ENCODE measurements at regions of chr1 and their contacts with region 1.

Region 1: GRCh38 chr1:224454397-224455066 is 19.9 kb upstream of the WDR26 start:
- DNase-seq: peak; percentile 79
- H3K4me3 ChIP-seq: peak overlapping the region; percentile 0 to 20
- H3K27ac ChIP-seq: peak overlapping the region; percentile 83 to 84
- H3K4me1 ChIP-seq: peaks cover 12% of the 10 kb centered on the region
- H3K27me3 ChIP-seq: no peaks in the 10 kb centered on the region
- CTCF ChIP-seq: no peak
- POLR2A ChIP-seq: no peak

Region 2: DNA sequence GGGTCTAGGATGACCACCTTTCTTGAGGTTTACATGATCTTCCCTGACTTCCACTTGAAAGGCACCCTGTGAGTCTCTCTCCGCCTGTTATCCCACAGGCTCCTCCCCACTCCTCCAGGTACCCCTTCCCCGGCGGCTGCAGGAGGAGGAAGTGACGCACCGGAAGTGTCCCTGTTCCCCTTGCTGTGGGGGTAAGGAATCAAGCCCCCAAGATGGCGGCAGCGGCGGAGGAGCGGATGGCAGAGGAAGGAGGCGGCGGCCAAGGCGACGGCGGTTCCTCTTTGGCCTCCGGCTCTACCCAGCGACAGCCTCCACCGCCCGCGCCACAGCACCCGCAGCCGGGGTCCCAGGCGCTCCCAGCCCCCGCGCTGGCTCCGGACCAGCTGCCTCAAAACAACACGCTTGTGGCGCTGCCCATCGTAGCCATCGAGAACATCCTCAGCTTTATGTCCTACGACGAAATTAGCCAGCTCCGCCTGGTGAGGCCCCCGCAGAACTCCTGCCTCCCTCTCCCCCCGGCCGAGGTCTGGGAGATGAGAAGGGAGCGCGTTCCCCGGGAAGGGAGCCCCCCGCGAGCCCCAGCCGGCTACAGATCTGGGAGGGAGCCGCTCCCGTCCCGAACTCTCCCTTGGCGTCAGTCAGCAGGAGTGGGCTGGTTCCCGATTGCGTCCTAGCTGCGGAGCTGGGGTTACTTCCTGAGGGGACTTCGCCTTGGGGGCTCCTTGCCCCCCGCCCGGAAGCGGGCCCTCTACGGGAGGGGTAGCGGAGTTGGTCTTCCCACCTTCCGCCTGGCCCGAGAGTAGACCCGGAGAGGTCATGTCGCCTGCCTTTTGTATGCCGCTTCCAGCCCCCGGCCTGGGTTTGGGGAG is 340.4 kb before region 1 on chr1 and contains the start of gene FBXO28:
- intact Hi-C with region 1: loop called (anchors 5 kb)
- DNase-seq: peak; percentile 95
- H3K4me3 ChIP-seq: peak within 1 kb of the TSS; percentile 79 to 96
- H3K27ac ChIP-seq: peak within 1 kb of the TSS; percentile 95 to 97
- H3K4me1 ChIP-seq: peaks cover 4% of the 10 kb centered on the region
- H3K27me3 ChIP-seq: no peaks in the 10 kb centered on the region
- CTCF ChIP-seq: no peak
- POLR2A ChIP-seq: peak; percentile 92
- total RNA-seq, gene FBXO28: 29.0 to 40.0 TPM

Region 3: GRCh38 chr1:224356685-224357625 is 97.6 kb before region 1 on chr1 and contains the start of gene CNIH4:
- intact Hi-C with region 1: loop called (anchors 10 kb)
- DNase-seq: peak; percentile 95
- H3K4me3 ChIP-seq: peak within 1 kb of the TSS; percentile 79 to 91
- H3K27ac ChIP-seq: peak within 1 kb of the TSS; percentile 80 to 88
- H3K4me1 ChIP-seq: no peaks in the 10 kb centered on the region
- H3K27me3 ChIP-seq: no peaks in the 10 kb centered on the region
- CTCF ChIP-seq: no peak
- POLR2A ChIP-seq: peak; percentile 95
- total RNA-seq, gene CNIH4: 14.5 to 31.5 TPM

Region 4: GRCh38 chr1:224434691-224435317 is 19.7 kb before region 1 on chr1 and contains the start of gene WDR26:
- intact Hi-C with region 1: loop called (anchors 1 kb)
- DNase-seq: peak; percentile 88
- H3K4me3 ChIP-seq: peak within 1 kb of the TSS; percentile 65 to 87
- H3K27ac ChIP-seq: peak within 1 kb of the TSS; percentile 94 to 97
- H3K4me1 ChIP-seq: peaks cover 8% of the 10 kb centered on the region
- H3K27me3 ChIP-seq: no peaks in the 10 kb centered on the region
- CTCF ChIP-seq: peak in 2 of 4 experiments; percentile 33 to 55
- POLR2A ChIP-seq: peak; percentile 80
- total RNA-seq, gene WDR26: 50.7 to 72.9 TPM

Region 5: DNA sequence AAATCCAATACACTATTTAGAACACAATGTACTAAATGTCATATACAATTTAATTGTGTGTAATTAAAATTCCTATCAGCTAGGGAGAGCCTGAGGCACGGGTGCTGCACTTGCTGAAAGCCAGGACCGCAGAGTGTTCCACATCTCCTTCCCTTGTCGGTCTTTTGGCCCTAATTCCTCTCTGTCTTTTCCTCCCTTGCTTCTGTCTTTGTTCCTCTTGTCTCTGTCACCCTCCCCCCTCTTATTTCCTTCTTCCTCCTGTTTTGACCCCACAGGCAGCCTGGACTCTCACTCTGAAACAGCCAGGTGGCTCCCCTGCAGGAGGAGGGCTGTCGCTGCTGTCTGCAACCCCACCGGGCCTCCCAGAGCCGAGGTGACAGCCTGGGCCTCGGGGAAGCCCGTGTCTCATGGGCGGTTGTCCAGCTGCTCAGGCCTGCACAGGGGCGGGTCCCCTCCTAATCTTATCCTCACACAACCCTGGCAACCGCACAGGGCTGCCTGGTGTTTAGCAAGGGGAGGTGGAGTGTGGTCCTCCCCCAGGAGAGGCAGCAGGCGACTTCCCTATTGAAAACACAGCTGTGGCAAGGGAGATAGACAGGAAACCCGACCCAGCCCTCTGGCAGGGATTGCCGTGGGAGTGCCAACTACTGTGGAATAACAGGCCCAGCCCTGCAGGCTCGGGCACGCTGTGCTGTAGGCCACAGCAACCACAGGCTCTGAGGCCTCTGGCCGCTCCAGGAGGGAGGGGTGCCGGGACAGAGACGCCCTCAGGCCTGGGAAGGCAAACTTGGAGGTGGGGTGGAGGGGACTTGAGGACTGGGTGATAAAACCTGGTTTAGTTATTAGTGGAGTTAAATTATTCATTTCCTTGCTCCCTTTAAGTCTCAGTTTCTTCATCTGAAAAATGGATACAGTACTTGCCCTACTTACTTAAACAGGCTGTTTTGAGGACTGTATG is 48.9 kb after region 1 on chr1:
- intact Hi-C with region 1: loop called (anchors 10 kb)
- DNase-seq: peak; percentile 96
- H3K4me3 ChIP-seq: peak overlapping the region in 1 of 2 donors; percentile 3
- H3K27ac ChIP-seq: peak overlapping the region; percentile 82 to 84
- H3K4me1 ChIP-seq: peaks cover 17% of the 10 kb centered on the region
- H3K27me3 ChIP-seq: no peaks in the 10 kb centered on the region
- CTCF ChIP-seq: peak in 1 of 4 experiments; percentile 16
- POLR2A ChIP-seq: no peak